ENCODE measurements at regions of chr16 and their contacts with region 1.

Region 1: DNA sequence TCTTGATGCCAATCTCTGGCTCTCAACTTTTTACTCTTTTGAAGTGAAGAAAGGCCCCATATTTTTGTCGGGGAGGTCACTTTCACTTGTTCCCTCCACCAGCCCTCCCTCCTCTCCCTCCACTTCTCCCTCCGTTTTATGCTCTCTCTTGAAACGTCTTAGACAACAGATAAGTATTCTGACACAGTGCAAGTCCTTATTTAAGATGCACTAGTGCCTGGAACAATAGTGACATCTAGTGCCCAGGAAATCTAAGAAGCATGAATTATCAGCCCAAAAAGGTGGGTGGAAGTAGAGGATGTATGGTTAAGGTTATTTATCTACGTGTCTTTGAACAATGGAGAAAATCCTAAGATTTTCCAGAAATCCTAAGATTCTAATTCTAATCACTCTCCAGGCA is 17.9 kb downstream of the PSME3IP1 start:
- DNase-seq: no peak
- ATAC-seq: peak; percentile 61 to 84 (median 80)
- H3K4me3 ChIP-seq: no peak overlapping the region
- H3K27ac ChIP-seq: peak overlapping the region in 1 of 12 donors; percentile 82
- H3K4me1 ChIP-seq: peaks cover 0 to 23% (median 12%) of the 10 kb centered on the region in 12 donors
- H3K27me3 ChIP-seq: no peaks in the 10 kb centered on the region
- CTCF ChIP-seq: peak; percentile 41 to 76 (median 64)
- POLR2A ChIP-seq: no peak

Region 2: GRCh38 chr16:56858374-56858773 is 309.6 kb before region 1 on chr16:
- intact Hi-C with region 1: loop called in 2 of 10 experiments (anchors 5 to 10 kb)
- DNase-seq: peak in 1 of 5 donors; percentile 31
- ATAC-seq: no peak
- H3K4me3 ChIP-seq: no peak overlapping the region
- H3K27ac ChIP-seq: no peak overlapping the region
- H3K4me1 ChIP-seq: peaks cover 0 to 21% (median 0%) of the 10 kb centered on the region in 12 donors
- H3K27me3 ChIP-seq: no peaks in the 10 kb centered on the region
- CTCF ChIP-seq: no peak
- POLR2A ChIP-seq: no peak

Region 3: GRCh38 chr16:57084257-57084770 is 83.6 kb before region 1 on chr16:
- intact Hi-C with region 1: loop called (anchors 1 to 5 kb)
- DNase-seq: peak; percentile 66 to 83 (median 73)
- ATAC-seq: peak; percentile 39 to 86 (median 84)
- H3K4me3 ChIP-seq: no peak overlapping the region
- H3K27ac ChIP-seq: peak overlapping the region in 1 of 12 donors; percentile 44
- H3K4me1 ChIP-seq: peaks cover 0 to 13% (median 3%) of the 10 kb centered on the region in 12 donors
- H3K27me3 ChIP-seq: no peaks in the 10 kb centered on the region
- CTCF ChIP-seq: peak; percentile 95 to 99 (median 98)
- POLR2A ChIP-seq: no peak

Region 4: GRCh38 chr16:57096192-57096591 is 71.8 kb before region 1 on chr16:
- intact Hi-C with region 1: no loop called
- DNase-seq: no peak
- ATAC-seq: no peak
- H3K4me3 ChIP-seq: no peak overlapping the region
- H3K27ac ChIP-seq: no peak overlapping the region
- H3K4me1 ChIP-seq: peaks cover 2 to 59% (median 18%) of the 10 kb centered on the region in 12 donors
- H3K27me3 ChIP-seq: no peaks in the 10 kb centered on the region
- CTCF ChIP-seq: no peak
- POLR2A ChIP-seq: no peak

Region 5: GRCh38 chr16:57185944-57186871 is 18.3 kb after region 1 on chr16 and contains the starts of genes PSME3IP1 and RSPRY1:
- intact Hi-C with region 1: loop called in 1 of 10 experiments (anchors 1 kb)
- DNase-seq: peak; percentile 97 to 99 (median 99)
- ATAC-seq: peak; percentile 97 to 99 (median 98)
- H3K4me3 ChIP-seq: peak within 1 kb of the TSS; percentile 80 to 99 (median 93)
- H3K27ac ChIP-seq: peak within 1 kb of the TSS; percentile 78 to 97 (median 94)
- H3K4me1 ChIP-seq: peaks cover 9 to 50% (median 27%) of the 10 kb centered on the region in 12 donors
- H3K27me3 ChIP-seq: no peaks in the 10 kb centered on the region
- CTCF ChIP-seq: no peak
- POLR2A ChIP-seq: peak in 1 of 2 donors; percentile 71
- total RNA-seq, gene PSME3IP1: 48.8 to 71.9 (median 65.8) TPM
- total RNA-seq, gene RSPRY1: 13.4 to 22.9 (median 17.1) TPM

Measured in heart left ventricle (tissue), 16 donors.